ENCODE measurements at regions of chr12 and their contacts with region 1.

Region 1: GRCh38 chr12:59517522-59517921 is 78.3 kb upstream of the SLC16A7 start:
- DNase-seq: no peak
- H3K4me3 ChIP-seq: no peak overlapping the region
- H3K27ac ChIP-seq: no peak overlapping the region
- H3K4me1 ChIP-seq: no peaks in the 10 kb centered on the region
- H3K27me3 ChIP-seq: no peaks in the 10 kb centered on the region
- CTCF ChIP-seq: no peak

Region 2: DNA sequence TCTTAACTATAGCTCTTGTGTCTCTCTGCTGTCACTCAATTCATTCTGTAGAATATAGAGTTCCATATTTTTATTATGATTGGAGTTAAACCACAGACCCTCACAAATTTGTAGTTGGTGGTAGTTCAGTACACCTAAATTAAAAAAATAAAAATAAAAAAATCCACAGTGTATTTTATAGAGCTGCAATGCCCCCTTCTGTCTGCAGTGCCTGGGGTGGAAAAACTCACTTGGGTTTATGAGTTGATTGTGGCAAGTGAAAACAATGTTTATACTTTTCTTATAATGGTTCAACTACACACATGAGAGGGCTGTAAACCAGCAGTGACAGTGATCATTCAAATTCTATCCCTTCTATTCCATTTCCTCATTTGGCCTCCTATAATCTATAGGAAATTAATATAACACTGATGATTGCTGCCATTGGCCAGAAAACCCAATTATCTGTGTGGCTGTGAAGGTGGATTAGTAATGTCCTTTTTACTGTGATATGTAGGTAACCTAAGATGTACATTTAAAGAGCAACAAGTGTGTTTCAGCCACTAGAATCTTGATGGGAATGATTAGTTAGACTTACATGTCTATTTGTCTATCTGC is 430.3 kb before region 1 on chr12:
- CTCF ChIA-PET with region 1: no interaction called
- dilution Hi-C with region 1: no loop called
- in situ Hi-C with region 1: no loop called
- intact Hi-C with region 1: no loop called
- DNase-seq: no peak
- H3K4me3 ChIP-seq: no peak overlapping the region
- H3K27ac ChIP-seq: no peak overlapping the region
- H3K4me1 ChIP-seq: peaks cover 12% of the 10 kb centered on the region
- H3K27me3 ChIP-seq: no peaks in the 10 kb centered on the region
- CTCF ChIP-seq: peak; percentile 63 to 72

Region 3: DNA sequence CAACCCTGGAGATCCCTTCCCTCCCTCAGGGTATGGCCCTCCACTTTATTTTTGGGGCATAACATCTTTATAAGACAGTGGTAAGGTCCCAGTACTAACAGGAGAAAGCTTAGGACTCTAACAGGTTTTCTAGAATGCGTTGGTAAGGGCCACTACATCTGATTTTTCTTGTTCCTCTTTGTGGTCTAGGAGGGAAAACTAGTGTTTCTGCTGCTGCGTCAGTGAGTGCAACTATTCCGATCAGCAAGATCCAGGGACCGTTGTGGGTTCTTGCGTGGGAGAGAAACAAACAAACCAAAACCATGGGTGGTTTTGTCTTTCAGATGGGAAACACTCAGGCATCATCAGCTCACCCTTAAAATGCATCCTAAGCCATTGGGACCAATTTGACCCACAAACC is 45.2 kb before region 1 on chr12:
- CTCF ChIA-PET with region 1: no interaction called
- dilution Hi-C with region 1: loop called (anchors 5 kb)
- in situ Hi-C with region 1: no loop called
- intact Hi-C with region 1: no loop called
- DNase-seq: no peak
- H3K4me3 ChIP-seq: no peak overlapping the region
- H3K27ac ChIP-seq: no peak overlapping the region
- H3K4me1 ChIP-seq: no peaks in the 10 kb centered on the region
- H3K27me3 ChIP-seq: no peaks in the 10 kb centered on the region
- CTCF ChIP-seq: no peak

Region 4: GRCh38 chr12:59650402-59651228 is 133.1 kb after region 1 on chr12:
- CTCF ChIA-PET with region 1: no interaction called
- dilution Hi-C with region 1: no loop called
- in situ Hi-C with region 1: no loop called
- intact Hi-C with region 1: no loop called
- DNase-seq: no peak
- H3K4me3 ChIP-seq: no peak overlapping the region
- H3K27ac ChIP-seq: no peak overlapping the region
- H3K4me1 ChIP-seq: peaks cover 3% of the 10 kb centered on the region
- H3K27me3 ChIP-seq: no peaks in the 10 kb centered on the region
- CTCF ChIP-seq: no peak

Measured in mammary epithelial cell (primary cell).